PC-3 (cell line): ENCODE measurements at regions of chr10 and their contacts with region 1.

Region 1: GRCh38 chr10:35563261-35563891 is 41.8 kb upstream of the GJD4 start:
- DNase-seq: peak; percentile 98
- ATAC-seq: peak; percentile 85
- H3K4me3 ChIP-seq: no peak overlapping the region
- H3K27ac ChIP-seq: no peak overlapping the region
- H3K4me1 ChIP-seq: 0 out of 2 replicates have a peak, but pooled peaks cover 2% of the 10 kb centered on the region
- H3K27me3 ChIP-seq: no peaks in the 10 kb centered on the region
- CTCF ChIP-seq: peak; percentile 100

Region 2: GRCh38 chr10:34732926-34733325 is 830.5 kb before region 1 on chr10:
- CTCF ChIA-PET with region 1: no interaction called
- POLR2A ChIA-PET with region 1: no interaction called
- intact Hi-C with region 1: no loop called
- DNase-seq: peak; percentile 93
- ATAC-seq: peak; percentile 25
- H3K4me3 ChIP-seq: peak overlapping the region; percentile 0; the same call in 1 of the 2 replicates
- H3K27ac ChIP-seq: peak overlapping the region; percentile 71
- H3K4me1 ChIP-seq: peaks cover 43% of the 10 kb centered on the region
- H3K27me3 ChIP-seq: no peaks in the 10 kb centered on the region
- CTCF ChIP-seq: peak; percentile 86

Region 3: DNA sequence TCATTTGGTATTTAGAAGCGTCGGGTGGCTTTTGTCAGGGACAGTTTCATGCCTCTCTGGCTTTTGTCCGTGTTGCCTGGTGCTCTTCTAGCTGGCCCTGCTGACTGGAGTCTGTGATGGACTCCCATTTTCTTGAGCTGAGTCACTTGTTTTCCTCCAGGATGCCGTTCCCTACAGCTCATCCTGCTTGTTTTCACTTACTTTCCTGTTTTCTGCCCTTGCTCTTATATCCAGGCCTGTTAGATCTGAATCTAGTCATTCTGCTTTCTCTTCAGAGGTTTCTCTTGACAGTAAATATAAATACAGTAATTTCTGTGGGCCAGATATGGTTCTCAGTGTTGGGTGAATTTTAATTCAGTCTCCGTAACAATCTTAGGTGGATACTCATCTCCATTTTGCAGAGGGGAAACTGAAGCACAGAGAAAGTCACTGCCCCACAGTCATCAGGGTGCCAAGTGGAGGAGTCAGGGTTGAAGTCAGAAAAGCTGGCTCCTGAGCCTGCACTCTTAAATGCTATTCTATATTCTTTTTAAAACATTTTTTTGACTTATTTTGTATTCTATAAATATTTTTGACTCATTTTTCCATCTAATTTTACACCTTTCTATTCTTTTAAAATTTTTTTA is 141.7 kb before region 1 on chr10:
- CTCF ChIA-PET with region 1: interaction called, 3 read pairs
- POLR2A ChIA-PET with region 1: no interaction called
- intact Hi-C with region 1: loop called (anchors 5 kb)
- DNase-seq: peak; percentile 99
- ATAC-seq: peak; percentile 90
- H3K4me3 ChIP-seq: peak overlapping the region; percentile 37; the same call in 1 of the 2 replicates
- H3K27ac ChIP-seq: peak overlapping the region; percentile 62
- H3K4me1 ChIP-seq: peaks cover 63% of the 10 kb centered on the region
- H3K27me3 ChIP-seq: no peaks in the 10 kb centered on the region
- CTCF ChIP-seq: no peak

Region 4: GRCh38 chr10:35502692-35503091 is 60.7 kb before region 1 on chr10:
- CTCF ChIA-PET with region 1: no interaction called
- POLR2A ChIA-PET with region 1: no interaction called
- intact Hi-C with region 1: no loop called
- DNase-seq: no peak
- ATAC-seq: no peak
- H3K4me3 ChIP-seq: no peak overlapping the region
- H3K27ac ChIP-seq: no peak overlapping the region
- H3K4me1 ChIP-seq: no peaks in the 10 kb centered on the region
- H3K27me3 ChIP-seq: no peaks in the 10 kb centered on the region
- CTCF ChIP-seq: no peak

Region 5: DNA sequence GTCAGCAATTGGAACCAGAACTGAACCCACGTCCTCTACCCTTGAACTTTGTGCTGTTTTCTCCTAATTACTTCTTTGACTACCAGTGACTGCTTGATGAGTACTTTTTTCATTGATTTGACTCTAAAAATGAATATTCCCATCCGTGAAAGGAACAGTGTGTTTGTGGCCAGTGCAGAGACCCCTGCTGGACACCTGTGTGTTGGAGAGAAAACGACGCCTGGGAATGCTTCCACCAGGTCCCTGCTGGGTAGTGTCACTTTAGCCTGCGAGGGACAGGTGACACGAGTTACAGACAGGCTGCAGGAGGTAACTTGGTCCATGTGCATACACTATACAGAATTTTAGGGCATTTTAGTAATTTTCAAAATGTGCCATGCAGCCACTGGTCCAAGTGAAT is 35.0 kb after region 1 on chr10:
- CTCF ChIA-PET with region 1: interaction called, 5 read pairs
- POLR2A ChIA-PET with region 1: no interaction called
- intact Hi-C with region 1: loop called (anchors 1 kb)
- DNase-seq: peak; percentile 75
- ATAC-seq: peak; percentile 89
- H3K4me3 ChIP-seq: no peak overlapping the region
- H3K27ac ChIP-seq: no peak overlapping the region
- H3K4me1 ChIP-seq: no peaks in the 10 kb centered on the region
- H3K27me3 ChIP-seq: no peaks in the 10 kb centered on the region
- CTCF ChIP-seq: peak; percentile 99

Region 6: DNA sequence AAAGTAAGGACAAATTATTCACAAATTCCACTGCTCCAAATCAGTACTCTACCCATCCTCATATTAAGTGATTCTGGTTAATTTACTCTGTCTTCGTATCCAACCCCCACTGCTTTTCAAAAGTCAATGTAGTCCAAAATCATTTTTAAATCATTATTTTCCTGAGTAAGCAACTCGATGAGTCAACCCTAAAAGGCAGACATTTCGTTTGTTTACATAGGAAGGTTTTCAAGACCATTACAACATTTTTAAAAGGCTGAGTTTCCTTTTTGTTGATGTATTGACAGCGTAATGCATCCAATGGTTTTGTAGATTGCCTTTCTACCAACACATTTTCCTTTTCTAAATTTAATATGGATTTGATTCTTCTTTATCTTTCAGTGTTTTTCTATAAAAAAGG is 1039.0 kb after region 1 on chr10:
- CTCF ChIA-PET with region 1: no interaction called
- POLR2A ChIA-PET with region 1: no interaction called
- intact Hi-C with region 1: no loop called
- DNase-seq: peak; percentile 98
- ATAC-seq: peak; percentile 71
- H3K4me3 ChIP-seq: peak overlapping the region; percentile 2; the same call in 1 of the 2 replicates
- H3K27ac ChIP-seq: peak overlapping the region; percentile 30
- H3K4me1 ChIP-seq: peaks cover 47% of the 10 kb centered on the region
- H3K27me3 ChIP-seq: no peaks in the 10 kb centered on the region
- CTCF ChIP-seq: no peak

Region 7: DNA sequence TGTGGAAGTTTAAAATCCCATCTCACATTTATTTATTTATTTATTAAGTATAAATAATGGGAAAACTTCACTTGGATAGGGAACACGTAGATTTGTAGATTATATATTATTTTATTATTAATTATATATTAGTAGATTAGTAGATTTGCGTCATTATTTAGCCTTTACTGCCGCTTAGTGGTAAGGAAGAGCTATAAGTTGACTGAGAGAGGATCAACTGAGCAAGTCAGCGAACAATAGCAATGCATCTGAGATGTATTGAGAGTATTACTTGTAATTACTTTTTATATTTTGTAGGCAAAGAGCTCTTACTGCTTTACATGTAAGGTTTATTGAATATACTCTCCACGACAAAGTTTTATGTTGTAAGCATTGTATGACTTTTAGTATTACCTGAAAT is 1317.5 kb after region 1 on chr10:
- CTCF ChIA-PET with region 1: interaction called, 4 read pairs
- POLR2A ChIA-PET with region 1: no interaction called
- intact Hi-C with region 1: loop called (anchors 1 kb)
- DNase-seq: peak; percentile 93
- ATAC-seq: peak; percentile 86
- H3K4me3 ChIP-seq: no peak overlapping the region
- H3K27ac ChIP-seq: no peak overlapping the region
- H3K4me1 ChIP-seq: no peaks in the 10 kb centered on the region
- H3K27me3 ChIP-seq: 0 out of 2 replicates have a peak, but pooled peaks cover 3% of the 10 kb centered on the region
- CTCF ChIP-seq: peak; percentile 86